H1 (cell line): ENCODE measurements at regions of chr6 and their contacts with region 1.

Region 1: DNA sequence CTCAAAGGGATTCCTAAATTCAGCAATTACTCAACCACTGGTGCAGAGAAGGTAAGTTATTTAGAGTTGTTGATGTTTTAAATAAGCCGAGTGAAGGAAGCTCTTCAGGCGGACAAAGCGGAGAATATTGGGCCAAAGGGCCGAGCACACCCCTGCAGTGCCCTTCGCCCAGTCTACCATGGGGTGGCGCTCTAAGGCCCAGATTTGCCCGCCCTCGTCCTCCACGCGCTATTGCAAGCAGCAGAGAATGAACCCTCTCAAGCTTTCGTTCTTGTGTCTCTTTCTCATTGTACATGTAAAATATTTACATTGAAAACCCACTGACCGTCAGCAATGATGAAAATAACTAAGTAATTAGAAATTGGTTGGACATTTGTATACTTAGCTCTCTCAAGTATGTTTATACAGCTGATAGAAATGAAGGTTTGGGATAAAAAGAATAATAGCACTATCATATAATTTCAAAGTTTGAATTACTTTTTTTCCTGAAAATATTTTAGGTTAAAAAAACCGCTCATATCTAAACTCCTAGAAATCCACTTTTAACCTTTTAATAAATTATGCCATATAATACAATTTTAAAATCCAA is 195.0 kb upstream of the CEP162 start:
- DNase-seq: peak; percentile 41 to 92
- H3K4me3 ChIP-seq: no peak overlapping the region
- H3K27ac ChIP-seq: no peak overlapping the region
- H3K4me1 ChIP-seq: peaks cover 0 to 7% (median 2%) of the 10 kb centered on the region in 4 experiments; a peak in 2 of 7 replicates
- H3K27me3 ChIP-seq: no peaks in the 10 kb centered on the region
- CTCF ChIP-seq: peak; percentile 91 to 98 (median 95)
- EP300 ChIP-seq: no peak
- POLR2A ChIP-seq: no peak
- RAD21 ChIP-seq: peak; percentile 94 to 96

Region 2: GRCh38 chr6:84392261-84392660 is 30.2 kb before region 1 on chr6:
- CTCF ChIA-PET with region 1: no interaction called
- POLR2A ChIA-PET with region 1: no interaction called
- DNase-seq: no peak
- H3K4me3 ChIP-seq: no peak overlapping the region
- H3K27ac ChIP-seq: no peak overlapping the region
- H3K4me1 ChIP-seq: no peaks in the 10 kb centered on the region; a peak in 1 of 7 replicates
- H3K27me3 ChIP-seq: no peaks in the 10 kb centered on the region
- CTCF ChIP-seq: no peak
- EP300 ChIP-seq: no peak
- POLR2A ChIP-seq: no peak
- RAD21 ChIP-seq: no peak

Region 3: GRCh38 chr6:84411060-84411629 is 11.3 kb before region 1 on chr6:
- CTCF ChIA-PET with region 1: interaction called, 19 read pairs
- POLR2A ChIA-PET with region 1: no interaction called
- DNase-seq: no peak
- H3K4me3 ChIP-seq: no peak overlapping the region
- H3K27ac ChIP-seq: no peak overlapping the region
- H3K4me1 ChIP-seq: no peaks in the 10 kb centered on the region
- H3K27me3 ChIP-seq: no peaks in the 10 kb centered on the region
- CTCF ChIP-seq: no peak
- EP300 ChIP-seq: no peak
- POLR2A ChIP-seq: no peak
- RAD21 ChIP-seq: no peak

Region 4: GRCh38 chr6:84508981-84509380 is 86.5 kb after region 1 on chr6:
- CTCF ChIA-PET with region 1: interaction called, 10 read pairs
- POLR2A ChIA-PET with region 1: no interaction called
- DNase-seq: no peak
- H3K4me3 ChIP-seq: no peak overlapping the region
- H3K27ac ChIP-seq: no peak overlapping the region
- H3K4me1 ChIP-seq: no peaks in the 10 kb centered on the region
- H3K27me3 ChIP-seq: no peaks in the 10 kb centered on the region
- CTCF ChIP-seq: no peak
- EP300 ChIP-seq: no peak
- POLR2A ChIP-seq: no peak
- RAD21 ChIP-seq: no peak

Region 5: DNA sequence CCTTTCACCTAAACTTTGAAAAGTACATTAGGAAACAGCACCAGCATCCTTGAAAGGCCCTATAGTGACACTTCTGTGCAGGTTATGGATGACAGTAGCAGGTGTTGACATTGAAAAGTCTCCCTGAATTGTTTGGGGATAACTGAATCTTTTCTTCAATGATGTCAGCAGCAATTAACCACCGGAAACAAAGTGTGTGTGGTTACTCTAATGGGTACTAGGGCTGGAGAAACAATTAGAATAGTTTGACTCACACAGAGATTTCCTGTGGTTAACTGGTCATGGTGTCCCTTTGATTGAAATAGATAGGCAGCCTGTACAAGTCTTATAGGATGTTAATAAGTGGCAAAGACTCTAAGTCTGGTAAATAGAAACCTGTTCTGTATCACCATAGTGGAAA is 152.8 kb after region 1 on chr6:
- CTCF ChIA-PET with region 1: interaction called, 17 read pairs
- POLR2A ChIA-PET with region 1: no interaction called
- DNase-seq: no peak
- H3K4me3 ChIP-seq: no peak overlapping the region
- H3K27ac ChIP-seq: no peak overlapping the region
- H3K4me1 ChIP-seq: no peaks in the 10 kb centered on the region
- H3K27me3 ChIP-seq: no peaks in the 10 kb centered on the region
- CTCF ChIP-seq: no peak
- EP300 ChIP-seq: no peak
- POLR2A ChIP-seq: no peak
- RAD21 ChIP-seq: no peak

Region 6: GRCh38 chr6:84774157-84774984 is 351.9 kb after region 1 on chr6:
- CTCF ChIA-PET with region 1: interaction called, 13 read pairs
- POLR2A ChIA-PET with region 1: no interaction called
- DNase-seq: peak in 1 of 2 experiments; percentile 92
- H3K4me3 ChIP-seq: peak overlapping the region; percentile 32 to 75 (median 47)
- H3K27ac ChIP-seq: no peak overlapping the region
- H3K4me1 ChIP-seq: peaks cover 0 to 8% (median 2%) of the 10 kb centered on the region in 4 experiments; a peak in 2 of 7 replicates
- H3K27me3 ChIP-seq: peaks cover 47 to 79% (median 63%) of the 10 kb centered on the region in 4 experiments
- CTCF ChIP-seq: peak; percentile 85 to 94 (median 88)
- EP300 ChIP-seq: no peak
- POLR2A ChIP-seq: no peak
- RAD21 ChIP-seq: peak; percentile 47 to 66

Region 7: GRCh38 chr6:85394853-85395538 is 972.5 kb after region 1 on chr6:
- CTCF ChIA-PET with region 1: no interaction called
- POLR2A ChIA-PET with region 1: no interaction called
- DNase-seq: no peak
- H3K4me3 ChIP-seq: no peak overlapping the region
- H3K27ac ChIP-seq: no peak overlapping the region
- H3K4me1 ChIP-seq: no peaks in the 10 kb centered on the region
- H3K27me3 ChIP-seq: no peaks in the 10 kb centered on the region
- CTCF ChIP-seq: no peak
- EP300 ChIP-seq: no peak
- POLR2A ChIP-seq: no peak
- RAD21 ChIP-seq: no peak